Activated CD4-positive, alpha-beta T cell treated with anti-CD3 and anti-CD28 coated beads, Interleukin-2, amount 10 ng/mL, durations not matched to agents 7 days and 5 days (primary cell): ENCODE measurements at regions of chr4 and their contacts with region 1.

Region 1: DNA sequence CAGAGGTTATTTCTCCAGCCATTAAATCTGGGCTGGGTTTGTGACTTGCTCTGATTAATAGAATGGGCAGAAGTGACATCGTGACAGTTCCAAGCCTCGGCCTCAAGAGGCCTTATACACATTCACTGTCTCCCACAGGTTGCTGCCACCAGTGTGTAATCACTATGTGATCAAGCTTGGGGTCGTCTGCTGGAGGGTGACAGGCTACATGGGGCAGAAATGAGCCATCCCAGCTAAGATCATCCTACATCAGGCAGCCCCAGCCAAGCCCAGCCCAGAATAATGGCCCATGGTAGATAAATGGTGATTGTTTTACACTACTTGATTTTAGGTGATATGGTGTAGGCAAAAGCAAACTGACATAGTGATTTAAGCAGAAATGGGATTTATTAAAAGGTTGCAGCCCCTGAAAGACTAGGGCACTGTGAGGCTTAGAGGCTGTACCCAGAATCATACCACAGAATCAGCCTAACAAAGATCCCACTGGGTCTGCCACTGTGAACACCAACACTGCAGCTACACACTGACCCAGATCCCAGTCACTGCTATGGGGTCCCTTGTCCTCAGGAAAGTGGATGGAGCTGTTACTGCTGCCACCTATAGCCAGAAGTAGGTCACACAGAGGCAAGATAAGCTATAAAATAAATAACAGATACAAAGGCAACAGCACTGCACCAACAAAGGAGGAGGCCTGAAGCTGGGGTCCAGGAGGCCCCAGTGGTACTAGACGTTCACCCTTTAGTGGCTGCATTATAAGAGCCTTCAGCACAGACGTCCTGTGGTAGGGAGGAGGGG is 159.6 kb upstream of the RBPJ start:
- DNase-seq: no peak
- H3K4me3 Mint-ChIP-seq: no peak overlapping the region
- H3K27ac Mint-ChIP-seq: no peak overlapping the region
- H3K4me1 Mint-ChIP-seq: peaks cover 17% of the 10 kb centered on the region
- H3K27me3 Mint-ChIP-seq: no peaks in the 10 kb centered on the region

Region 2: GRCh38 chr4:26148927-26149326 is 12.3 kb before region 1 on chr4:
- CTCF ChIA-PET with region 1: interaction called, 10 read pairs
- POLR2A ChIA-PET with region 1: no interaction called
- DNase-seq: no peak
- H3K4me3 Mint-ChIP-seq: no peak overlapping the region
- H3K27ac Mint-ChIP-seq: no peak overlapping the region
- H3K4me1 Mint-ChIP-seq: peaks cover 13% of the 10 kb centered on the region
- H3K27me3 Mint-ChIP-seq: peaks cover 2% of the 10 kb centered on the region

Region 3: DNA sequence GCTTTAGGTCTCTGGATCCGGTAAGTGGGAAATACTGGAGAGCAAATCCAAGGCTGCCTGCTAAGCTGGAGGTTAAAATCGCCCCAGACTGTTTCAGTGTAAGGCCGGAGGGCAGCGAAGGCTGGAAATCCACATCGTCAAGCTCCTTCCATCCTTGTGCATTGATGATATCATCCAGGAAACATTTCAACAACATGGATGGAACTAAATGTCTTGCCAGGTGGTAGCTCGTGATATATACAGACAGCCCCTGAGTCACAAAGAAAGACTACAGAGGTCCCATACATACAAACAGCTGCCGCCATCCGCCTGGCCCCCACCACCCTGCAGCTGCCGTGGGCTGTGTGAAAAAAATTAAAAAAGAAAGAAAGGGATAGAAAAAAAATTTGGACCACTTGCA is 10.7 kb after region 1 on chr4:
- CTCF ChIA-PET with region 1: interaction called, 21 read pairs
- POLR2A ChIA-PET with region 1: no interaction called
- DNase-seq: no peak
- H3K4me3 Mint-ChIP-seq: no peak overlapping the region
- H3K27ac Mint-ChIP-seq: no peak overlapping the region
- H3K4me1 Mint-ChIP-seq: peaks cover 4% of the 10 kb centered on the region
- H3K27me3 Mint-ChIP-seq: peaks cover 4% of the 10 kb centered on the region